Naive thymus-derived CD4-positive, alpha-beta T cell (primary cell): ENCODE measurements at regions of chr12 and their contacts with region 1.

Region 1: GRCh38 chr12:111298582-111299436 is 70.1 kb downstream of the PHETA1 start:
- DNase-seq: peak in 8 of 9 donors; percentile 9 to 47 (median 34)
- ATAC-seq: peak; percentile 70
- H3K4me3 ChIP-seq: no peak overlapping the region
- H3K4me3 Mint-ChIP-seq: no peak overlapping the region
- H3K27ac ChIP-seq: no peak overlapping the region
- H3K27ac Mint-ChIP-seq: no peak overlapping the region
- H3K4me1 ChIP-seq: no peaks in the 10 kb centered on the region
- H3K4me1 Mint-ChIP-seq: no peaks in the 10 kb centered on the region
- H3K27me3 ChIP-seq: no peaks in the 10 kb centered on the region
- H3K27me3 Mint-ChIP-seq: peaks cover 0 to 5% (median 0%) of the 10 kb centered on the region in 5 donors

Region 2: DNA sequence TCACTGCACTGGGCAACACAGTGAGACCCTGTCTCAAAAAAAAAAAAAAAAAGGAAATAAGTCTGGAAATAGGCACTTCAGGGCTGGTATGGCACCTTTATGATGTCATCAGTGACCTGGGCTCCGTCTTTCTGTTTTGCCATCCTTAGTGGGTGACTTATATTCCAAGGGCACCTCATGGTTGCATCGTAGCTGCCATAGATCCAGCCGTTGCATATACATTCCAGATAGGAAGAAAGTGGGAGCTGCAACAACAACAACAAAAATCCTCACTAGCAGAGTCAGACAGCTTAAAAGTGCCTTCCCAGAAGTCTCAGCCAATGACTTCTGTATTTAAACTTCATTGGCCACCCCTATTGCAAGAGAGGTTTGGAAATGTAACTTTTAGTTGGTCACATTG is 404.9 kb before region 1 on chr12:
- CTCF ChIA-PET with region 1: interaction called, 3 read pairs
- POLR2A ChIA-PET with region 1: no interaction called
- intact Hi-C with region 1: loop called in 1 of 2 experiments (anchors 1 kb)
- DNase-seq: no peak
- ATAC-seq: no peak
- H3K4me3 ChIP-seq: no peak overlapping the region
- H3K4me3 Mint-ChIP-seq: peak overlapping the region in 6 of 10 donors; percentile 17 to 74 (median 50)
- H3K27ac ChIP-seq: no peak overlapping the region
- H3K27ac Mint-ChIP-seq: peak overlapping the region in 1 of 9 donors; percentile 67
- H3K4me1 ChIP-seq: no peaks in the 10 kb centered on the region
- H3K4me1 Mint-ChIP-seq: peaks cover 0 to 6% (median 0%) of the 10 kb centered on the region in 7 donors
- H3K27me3 ChIP-seq: no peaks in the 10 kb centered on the region
- H3K27me3 Mint-ChIP-seq: peaks cover 0 to 26% (median 4%) of the 10 kb centered on the region in 5 donors

Region 3: DNA sequence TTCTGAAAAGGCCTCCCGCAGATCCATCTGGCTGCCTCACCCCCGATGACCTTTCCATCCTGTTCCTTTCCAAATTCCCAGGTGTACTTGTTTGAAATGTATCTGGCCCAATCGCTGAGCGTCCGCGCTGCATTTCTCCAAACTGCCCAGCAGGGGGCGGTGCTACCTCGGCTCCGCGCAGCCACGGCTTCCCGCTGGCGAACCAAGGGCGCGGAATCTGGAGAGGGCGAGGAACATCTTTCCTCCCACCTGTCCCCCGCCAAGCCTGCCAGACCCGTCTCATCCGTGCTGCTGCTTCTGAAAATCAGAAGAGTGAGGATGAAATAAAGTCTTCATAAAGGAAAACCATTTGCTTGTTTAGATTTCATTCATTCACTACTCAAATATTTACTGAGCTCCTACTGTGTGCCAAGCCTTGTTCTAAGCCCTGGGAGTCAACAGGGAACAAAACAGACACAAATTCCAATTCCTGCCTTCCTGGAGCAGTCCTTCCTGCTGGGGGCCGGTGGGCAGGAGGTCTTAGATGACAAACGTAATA is 361.6 kb before region 1 on chr12:
- CTCF ChIA-PET with region 1: no interaction called
- POLR2A ChIA-PET with region 1: no interaction called
- intact Hi-C with region 1: loop called (anchors 1 to 5 kb)
- DNase-seq: peak; percentile 22 to 67 (median 51)
- ATAC-seq: peak; percentile 72
- H3K4me3 ChIP-seq: no peak overlapping the region
- H3K4me3 Mint-ChIP-seq: peak overlapping the region in 5 of 10 donors; percentile 7 to 61 (median 31)
- H3K27ac ChIP-seq: no peak overlapping the region
- H3K27ac Mint-ChIP-seq: no peak overlapping the region
- H3K4me1 ChIP-seq: peaks cover 0 to 5% of the 10 kb centered on the region in 2 donors
- H3K4me1 Mint-ChIP-seq: peaks cover 0 to 7% (median 6%) of the 10 kb centered on the region in 7 donors
- H3K27me3 ChIP-seq: no peaks in the 10 kb centered on the region
- H3K27me3 Mint-ChIP-seq: peaks cover 7 to 22% (median 13%) of the 10 kb centered on the region in 5 donors

Region 4: GRCh38 chr12:111024205-111024801 is 274.5 kb before region 1 on chr12:
- CTCF ChIA-PET with region 1: interaction called, 8 read pairs
- POLR2A ChIA-PET with region 1: no interaction called
- intact Hi-C with region 1: loop called (anchors 1 to 5 kb)
- DNase-seq: peak in 8 of 9 donors; percentile 25 to 55 (median 40)
- ATAC-seq: peak; percentile 76
- H3K4me3 ChIP-seq: no peak overlapping the region
- H3K4me3 Mint-ChIP-seq: no peak overlapping the region
- H3K27ac ChIP-seq: no peak overlapping the region
- H3K27ac Mint-ChIP-seq: peak overlapping the region in 3 of 9 donors; percentile 33 to 77 (median 41)
- H3K4me1 ChIP-seq: peaks cover 0 to 6% of the 10 kb centered on the region in 2 donors
- H3K4me1 Mint-ChIP-seq: peaks cover 0 to 10% (median 6%) of the 10 kb centered on the region in 7 donors
- H3K27me3 ChIP-seq: no peaks in the 10 kb centered on the region
- H3K27me3 Mint-ChIP-seq: peaks cover 12 to 41% (median 25%) of the 10 kb centered on the region in 5 donors

Region 5: GRCh38 chr12:111261911-111262676 is 36.7 kb before region 1 on chr12:
- CTCF ChIA-PET with region 1: no interaction called
- POLR2A ChIA-PET with region 1: no interaction called
- intact Hi-C with region 1: no loop called
- DNase-seq: no peak
- ATAC-seq: no peak
- H3K4me3 ChIP-seq: no peak overlapping the region
- H3K4me3 Mint-ChIP-seq: no peak overlapping the region
- H3K27ac ChIP-seq: no peak overlapping the region
- H3K27ac Mint-ChIP-seq: no peak overlapping the region
- H3K4me1 ChIP-seq: no peaks in the 10 kb centered on the region
- H3K4me1 Mint-ChIP-seq: peaks cover 0 to 3% (median 0%) of the 10 kb centered on the region in 7 donors
- H3K27me3 ChIP-seq: no peaks in the 10 kb centered on the region
- H3K27me3 Mint-ChIP-seq: peaks cover 0 to 7% (median 0%) of the 10 kb centered on the region in 5 donors